RWPE1 (cell line): ENCODE measurements at regions of chr7 and their contacts with region 1.

Region 1: DNA sequence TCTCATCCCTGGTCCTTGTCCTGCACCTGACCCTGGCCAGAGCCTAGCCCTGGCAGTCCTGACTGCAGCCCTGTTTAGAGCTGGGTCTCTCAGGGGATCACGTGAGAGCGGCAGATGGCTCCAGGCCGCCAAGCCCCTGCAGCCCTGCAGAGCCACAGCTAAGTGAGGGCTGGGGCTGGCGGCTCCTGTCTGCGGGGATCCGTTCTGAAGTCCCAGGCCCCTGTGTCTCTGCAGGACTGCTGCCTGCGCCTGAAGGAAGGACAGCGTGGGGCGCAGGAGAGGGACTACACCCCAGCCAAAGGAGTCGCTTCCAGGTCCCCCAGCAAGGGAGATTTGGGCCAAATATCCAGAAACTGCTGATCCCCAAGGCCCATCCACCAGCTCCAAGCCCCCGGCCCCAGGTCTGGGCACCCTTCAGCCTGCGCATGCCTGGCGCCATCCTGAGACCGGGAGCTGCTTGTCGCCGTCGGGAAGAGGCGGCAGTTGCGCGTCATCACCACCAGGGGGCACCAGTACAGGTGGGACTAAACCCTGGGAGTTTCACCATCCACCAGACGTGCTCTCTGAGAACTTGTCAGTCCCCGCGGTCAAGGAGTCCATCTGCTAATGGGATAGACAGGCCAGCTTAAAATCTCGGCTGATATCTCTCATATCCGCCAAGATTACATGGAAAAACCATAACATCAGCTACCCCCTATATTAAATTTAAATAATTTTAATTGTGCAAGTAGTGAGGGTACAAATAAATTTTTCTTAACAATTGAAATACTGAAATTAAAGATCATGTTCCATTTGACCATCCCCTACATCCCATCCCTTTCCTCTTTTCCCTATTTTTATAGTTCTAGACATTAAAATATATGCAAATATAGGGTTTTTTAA is 25.1 kb upstream of the GHRHR start:
- DNase-seq: peak; percentile 79
- H3K27ac ChIP-seq: no peak overlapping the region
- CTCF ChIP-seq: peak; percentile 96

Region 2: GRCh38 chr7:30877015-30877769 is 61.5 kb before region 1 on chr7:
- CTCF ChIA-PET with region 1: no interaction called
- POLR2A ChIA-PET with region 1: no interaction called
- DNase-seq: no peak
- H3K27ac ChIP-seq: no peak overlapping the region
- CTCF ChIP-seq: no peak

Region 3: GRCh38 chr7:30920584-30921539 is 17.8 kb before region 1 on chr7:
- CTCF ChIA-PET with region 1: interaction called, 13 read pairs
- POLR2A ChIA-PET with region 1: no interaction called
- DNase-seq: peak; percentile 41
- H3K27ac ChIP-seq: peak overlapping the region; percentile 81
- CTCF ChIP-seq: no peak